Activated T-helper 2 cell treated with anti-CD3 and anti-CD28 coated beads, Interferon-gamma antibody, Interleukin-2, Interleukin-4, amounts not matched to agents 10 μg/mL and 5 μg/mL and 100 μg/mL, durations not matched to agents 14 hours and 24 hours and 36 hours (primary cell): ENCODE measurements at regions of chr11 and their contacts with region 1.

Region 1: GRCh38 chr11:124673333-124674167 is at the starts of genes SIAE and SPA17:
- DNase-seq: peak; percentile 84
- H3K4me3 Mint-ChIP-seq: peak within 1 kb of the TSS; percentile 88
- H3K27ac Mint-ChIP-seq: peak within 1 kb of the TSS; percentile 86
- H3K4me1 Mint-ChIP-seq: peaks cover 36% of the 10 kb centered on the region
- H3K27me3 Mint-ChIP-seq: no peaks in the 10 kb centered on the region
- total RNA-seq, gene SIAE: 5.0 and 5.2 TPM in 2 replicates
- total RNA-seq, gene SPA17: 2.3 and 2.9 TPM in 2 replicates

Region 2: GRCh38 chr11:124622531-124623451 is 50.8 kb before region 1 on chr11 and contains the start of gene TBRG1:
- intact Hi-C with region 1: loop called (anchors 2 kb)
- DNase-seq: peak; percentile 78
- H3K4me3 Mint-ChIP-seq: peak within 1 kb of the TSS; percentile 96
- H3K27ac Mint-ChIP-seq: peak within 1 kb of the TSS; percentile 92
- H3K4me1 Mint-ChIP-seq: peaks cover 25% of the 10 kb centered on the region
- H3K27me3 Mint-ChIP-seq: peaks cover 24% of the 10 kb centered on the region
- total RNA-seq, gene TBRG1: 36.1 and 37.4 TPM in 2 replicates

Region 3: DNA sequence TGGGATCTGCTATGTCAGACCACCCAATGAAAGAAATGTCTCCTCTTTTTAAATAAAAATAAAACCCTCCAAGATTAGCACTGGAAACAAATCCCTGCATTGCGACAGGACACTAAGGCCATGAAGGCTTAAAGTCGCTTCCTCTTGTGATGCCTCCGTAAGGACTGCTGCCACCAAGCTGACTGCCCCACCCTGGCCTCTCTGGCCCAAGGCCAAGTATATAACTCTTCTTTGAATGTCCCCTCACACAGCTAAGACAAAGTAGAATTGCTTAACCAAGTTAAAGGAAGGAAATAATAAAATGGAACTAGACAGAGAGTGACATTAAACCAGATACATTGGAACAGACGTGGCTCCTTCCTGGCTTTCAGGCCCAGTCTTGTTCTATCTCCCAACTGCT is 58.7 kb after region 1 on chr11:
- intact Hi-C with region 1: no loop called
- DNase-seq: no peak
- H3K4me3 Mint-ChIP-seq: no peak overlapping the region
- H3K27ac Mint-ChIP-seq: no peak overlapping the region
- H3K4me1 Mint-ChIP-seq: no peaks in the 10 kb centered on the region
- H3K27me3 Mint-ChIP-seq: peaks cover 30% of the 10 kb centered on the region

Region 4: DNA sequence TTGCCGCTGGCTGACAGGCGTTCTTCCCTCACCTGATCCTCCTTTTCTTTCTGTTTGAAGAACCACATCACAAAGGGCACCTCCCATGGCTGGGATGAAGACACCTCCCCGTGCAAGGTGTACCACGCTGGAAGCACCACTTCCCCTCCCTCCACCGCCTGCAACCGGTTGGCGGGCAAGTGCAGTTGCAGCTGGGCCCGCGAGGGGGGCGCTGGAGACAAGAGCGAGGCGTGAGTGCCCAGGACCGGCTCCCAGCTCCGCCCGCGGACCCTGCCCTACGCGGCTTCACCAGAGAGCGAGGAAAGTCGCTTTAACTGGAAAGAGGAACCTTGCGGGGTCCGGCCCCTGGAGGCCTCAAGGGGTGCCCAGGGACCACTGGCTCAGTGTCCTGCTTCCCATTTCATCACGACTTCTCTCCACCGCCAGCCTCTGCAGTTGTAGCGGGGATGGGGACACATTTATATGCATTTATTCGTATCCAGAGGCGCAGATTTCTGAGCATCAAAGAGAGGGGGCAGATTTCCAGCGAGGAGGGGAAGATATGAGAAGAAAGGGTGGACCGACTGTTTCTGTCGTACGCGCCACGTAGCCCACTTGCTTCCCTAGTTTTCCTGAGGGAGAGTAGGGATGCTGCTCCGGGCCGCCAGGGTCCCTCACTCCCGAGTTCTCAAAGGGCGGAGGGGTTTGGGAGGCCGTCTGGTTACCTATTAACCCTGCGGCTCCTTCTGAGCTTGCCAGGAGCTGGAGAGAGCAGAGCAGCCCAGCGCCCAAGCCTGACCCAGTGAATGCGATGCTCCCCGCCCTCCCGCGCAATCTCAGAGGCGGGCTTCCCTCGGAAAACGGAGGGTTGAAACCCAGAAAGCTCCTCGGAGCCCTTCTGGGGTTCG is 85.0 kb after region 1 on chr11:
- intact Hi-C with region 1: loop called (anchors 1 kb)
- DNase-seq: peak; percentile 64
- H3K4me3 Mint-ChIP-seq: peak overlapping the region; percentile 62
- H3K27ac Mint-ChIP-seq: no peak overlapping the region
- H3K4me1 Mint-ChIP-seq: peaks cover 16% of the 10 kb centered on the region
- H3K27me3 Mint-ChIP-seq: peaks cover 59% of the 10 kb centered on the region

Region 5: DNA sequence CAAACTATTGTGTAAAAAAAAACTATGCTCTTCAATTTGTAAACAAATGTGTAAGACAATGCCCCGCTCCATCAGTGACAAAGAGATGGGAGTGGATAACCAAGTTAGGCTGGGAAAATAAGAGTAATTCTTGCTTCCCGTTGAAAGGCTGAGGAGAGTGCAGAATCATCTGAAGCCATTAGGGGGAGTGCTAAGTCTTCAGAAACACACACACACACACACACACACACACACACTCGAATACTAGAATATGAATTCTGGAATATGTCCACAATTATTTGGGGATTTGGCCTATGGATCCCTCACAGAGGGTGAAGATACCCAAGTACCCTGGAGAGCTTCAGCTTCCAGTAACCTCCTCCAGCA is 163.9 kb after region 1 on chr11:
- intact Hi-C with region 1: loop called (anchors 1 kb)
- DNase-seq: no peak
- H3K4me3 Mint-ChIP-seq: no peak overlapping the region
- H3K27ac Mint-ChIP-seq: no peak overlapping the region
- H3K4me1 Mint-ChIP-seq: peaks cover 14% of the 10 kb centered on the region
- H3K27me3 Mint-ChIP-seq: peaks cover 58% of the 10 kb centered on the region

Region 6: GRCh38 chr11:124953753-124954589 is 280.4 kb after region 1 on chr11 and contains the start of gene CCDC15:
- intact Hi-C with region 1: loop called (anchors 2 kb)
- DNase-seq: peak; percentile 94
- H3K4me3 Mint-ChIP-seq: no peak within 1 kb of the TSS
- H3K27ac Mint-ChIP-seq: no peak within 1 kb of the TSS
- H3K4me1 Mint-ChIP-seq: peaks cover 21% of the 10 kb centered on the region
- H3K27me3 Mint-ChIP-seq: no peaks in the 10 kb centered on the region
- total RNA-seq, gene CCDC15: 3.6 and 3.7 TPM in 2 replicates